BJ (cell line): ENCODE measurements at regions of chr6 and their contacts with region 1.

Region 1: DNA sequence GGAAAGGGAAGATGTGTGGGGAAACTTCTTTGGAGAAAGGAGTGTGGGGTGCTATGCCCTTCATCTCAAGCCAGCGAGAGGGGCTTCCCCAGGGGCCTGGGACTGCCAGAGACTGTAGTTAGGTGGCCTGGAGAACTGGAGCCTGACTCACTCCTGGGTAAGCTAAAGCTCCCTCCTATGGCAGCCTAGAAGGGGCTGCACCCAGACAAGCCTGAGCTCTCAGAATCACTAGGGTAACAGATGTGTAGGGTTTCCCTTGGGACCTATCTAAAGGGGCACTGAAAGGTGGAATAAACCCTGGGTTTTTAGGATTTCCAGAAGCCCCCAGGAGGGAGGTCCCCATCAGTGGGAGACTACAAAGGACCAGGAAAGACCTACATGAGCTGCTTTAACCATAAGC is 1.6 kb upstream of the ARMC2 start:
- DNase-seq: no peak
- H3K4me3 ChIP-seq: no peak overlapping the region
- H3K27me3 ChIP-seq: no peaks in the 10 kb centered on the region; the same call in none of the 2 replicates
- CTCF ChIP-seq: no peak

Region 2: DNA sequence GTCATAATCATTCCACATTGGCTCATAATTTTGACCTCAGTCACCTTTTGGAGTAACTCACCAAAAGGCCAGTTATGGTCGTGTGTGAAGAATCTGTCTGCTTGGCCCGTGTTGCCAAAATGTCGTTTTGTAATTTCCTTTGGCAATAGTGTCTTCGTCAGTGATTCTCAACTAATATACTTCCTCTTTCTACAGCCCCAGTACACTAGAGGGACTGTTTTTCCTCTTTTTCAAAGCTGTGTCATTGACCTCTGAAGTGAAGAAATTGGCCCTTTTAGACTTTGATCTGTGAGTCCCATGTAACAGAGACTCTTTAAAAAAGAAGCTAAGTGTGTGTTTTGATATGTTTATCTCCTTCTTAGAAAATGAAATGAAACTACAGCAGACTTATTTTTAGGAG is 280.7 kb before region 1 on chr6:
- CTCF ChIA-PET with region 1: no interaction called
- POLR2A ChIA-PET with region 1: interaction called, 11 read pairs
- DNase-seq: no peak
- H3K4me3 ChIP-seq: no peak overlapping the region
- H3K27me3 ChIP-seq: no peaks in the 10 kb centered on the region
- CTCF ChIP-seq: peak; percentile 36

Region 3: GRCh38 chr6:108835218-108835850 is 11.3 kb before region 1 on chr6:
- CTCF ChIA-PET with region 1: interaction called, 17 read pairs
- POLR2A ChIA-PET with region 1: interaction called, 4 read pairs
- DNase-seq: no peak
- H3K4me3 ChIP-seq: no peak overlapping the region
- H3K27me3 ChIP-seq: no peaks in the 10 kb centered on the region
- CTCF ChIP-seq: peak; percentile 90

Region 4: GRCh38 chr6:108862479-108863191 is 16.0 kb after region 1 on chr6:
- CTCF ChIA-PET with region 1: interaction called, 4 read pairs
- POLR2A ChIA-PET with region 1: interaction called, 12 read pairs
- DNase-seq: no peak
- H3K4me3 ChIP-seq: no peak overlapping the region
- H3K27me3 ChIP-seq: no peaks in the 10 kb centered on the region
- CTCF ChIP-seq: no peak

Region 5: GRCh38 chr6:110307368-110307767 is 1460.7 kb after region 1 on chr6:
- CTCF ChIA-PET with region 1: no interaction called
- POLR2A ChIA-PET with region 1: no interaction called
- DNase-seq: no peak
- H3K4me3 ChIP-seq: no peak overlapping the region
- H3K27me3 ChIP-seq: no peaks in the 10 kb centered on the region
- CTCF ChIP-seq: no peak